ENCODE measurements at regions of chr13 and their contacts with region 1.

Region 1: GRCh38 chr13:44470638-44471562 is 97.3 kb downstream of the SERP2 start:
- DNase-seq: no peak
- H3K4me3 ChIP-seq: no peak overlapping the region
- H3K27me3 ChIP-seq: no peaks in the 10 kb centered on the region
- CTCF ChIP-seq: peak; percentile 35; the same call in 1 of the 2 replicates

Region 2: DNA sequence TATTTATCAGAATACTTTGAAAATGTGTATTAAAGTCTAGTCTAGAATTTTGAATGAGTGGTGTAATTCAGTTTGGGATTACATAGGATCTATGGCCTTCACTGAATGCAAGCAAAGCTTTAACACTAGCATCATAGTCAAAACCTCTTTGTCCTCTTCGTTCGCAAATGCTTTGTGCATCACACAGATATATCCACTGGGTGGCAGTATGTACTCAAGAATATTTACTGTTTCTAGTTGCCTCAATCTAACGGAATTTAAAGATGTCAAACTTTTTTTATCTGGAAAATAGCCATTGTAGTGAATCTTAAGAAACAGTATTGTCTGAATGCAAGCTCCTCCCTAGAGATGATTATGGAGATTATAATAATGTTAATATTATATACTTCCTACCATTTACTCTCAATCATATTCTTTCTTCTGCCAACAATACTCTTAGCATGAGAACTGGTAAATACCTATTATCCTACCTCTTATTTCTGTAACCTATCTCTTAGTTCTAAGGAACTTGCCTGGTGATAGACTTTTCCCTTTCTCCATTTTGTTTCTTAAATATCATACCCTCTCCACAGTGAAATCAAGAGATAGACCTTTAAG is 565.4 kb before region 1 on chr13:
- CTCF ChIA-PET with region 1: interaction called, 14 read pairs
- POLR2A ChIA-PET with region 1: no interaction called
- DNase-seq: no peak
- H3K4me3 ChIP-seq: no peak overlapping the region
- H3K27me3 ChIP-seq: no peaks in the 10 kb centered on the region
- CTCF ChIP-seq: peak; percentile 54

Region 3: GRCh38 chr13:44734201-44734707 is 263.4 kb after region 1 on chr13:
- CTCF ChIA-PET with region 1: no interaction called
- POLR2A ChIA-PET with region 1: interaction called, 12 read pairs
- DNase-seq: no peak
- H3K4me3 ChIP-seq: no peak overlapping the region
- H3K27me3 ChIP-seq: no peaks in the 10 kb centered on the region
- CTCF ChIP-seq: no peak